Ovary (tissue), 10 donors: ENCODE measurements at regions of chr3 and their contacts with region 1.

Region 1: DNA sequence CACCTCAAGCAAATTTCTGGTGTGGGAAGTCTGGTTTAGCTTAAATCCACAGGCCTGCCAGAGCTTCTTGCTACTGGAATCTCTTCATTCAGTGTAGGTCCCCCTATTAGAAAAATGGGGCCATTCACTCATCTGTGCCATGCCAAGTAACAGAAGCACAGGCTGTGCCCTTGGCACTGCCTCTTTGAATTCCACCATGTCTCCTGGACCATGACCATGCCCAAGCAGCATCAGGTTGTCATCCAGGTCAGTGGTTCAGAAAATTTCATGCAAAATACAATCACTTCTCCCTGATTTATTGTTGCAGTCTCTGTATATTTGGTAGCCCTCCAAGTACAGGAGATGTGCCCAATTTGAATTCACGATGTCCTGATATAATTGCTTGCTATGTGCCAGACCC is 602.1 kb upstream of the ZNF385D start:
- DNase-seq: no peak
- H3K4me3 ChIP-seq: no peak overlapping the region
- H3K27ac ChIP-seq: no peak overlapping the region
- H3K4me1 ChIP-seq: no peaks in the 10 kb centered on the region
- H3K27me3 ChIP-seq: no peaks in the 10 kb centered on the region
- CTCF ChIP-seq: no peak
- EP300 ChIP-seq: no peak
- POLR2A ChIP-seq: no peak

Region 2: DNA sequence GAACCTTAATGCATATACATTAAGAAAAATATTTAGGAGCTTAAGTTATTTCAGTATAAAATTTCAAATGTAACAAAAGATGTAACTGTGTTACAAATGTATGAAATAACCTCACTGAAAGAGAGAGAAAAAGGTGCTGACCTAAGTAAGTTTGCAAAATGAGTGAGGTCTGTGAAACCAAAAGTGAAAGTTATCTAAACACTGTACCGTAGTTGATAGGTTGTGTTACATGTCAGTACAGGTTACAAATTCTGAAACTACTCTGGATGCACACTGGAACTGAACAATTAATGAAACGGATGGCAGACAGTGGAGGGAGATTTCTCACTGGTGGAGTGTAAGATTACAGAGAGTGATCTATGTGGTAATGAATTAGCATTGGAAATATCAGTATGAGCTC is 1022.8 kb before region 1 on chr3:
- intact Hi-C with region 1: loop called in 1 of 4 experiments (anchors 5 kb)
- DNase-seq: no peak
- H3K4me3 ChIP-seq: no peak overlapping the region
- H3K27ac ChIP-seq: no peak overlapping the region
- H3K4me1 ChIP-seq: peaks cover 1% of the 10 kb centered on the region
- H3K27me3 ChIP-seq: no peaks in the 10 kb centered on the region
- CTCF ChIP-seq: no peak
- EP300 ChIP-seq: no peak
- POLR2A ChIP-seq: no peak